ENCODE measurements at regions of chr17 and their contacts with region 1.

Region 1: GRCh38 chr17:50956750-50957523 is 90.8 kb upstream of the TOB1 start:
- DNase-seq: peak; percentile 79
- ATAC-seq: peak; percentile 95
- H3K4me3 Mint-ChIP-seq: no peak overlapping the region
- H3K27ac Mint-ChIP-seq: no peak overlapping the region
- H3K4me1 Mint-ChIP-seq: peaks cover 23% of the 10 kb centered on the region
- H3K27me3 Mint-ChIP-seq: no peaks in the 10 kb centered on the region

Region 2: GRCh38 chr17:50783193-50783660 is 173.7 kb before region 1 on chr17:
- CTCF ChIA-PET with region 1: interaction called, 24 read pairs
- POLR2A ChIA-PET with region 1: no interaction called
- DNase-seq: peak; percentile 85
- ATAC-seq: peak; percentile 67
- H3K4me3 Mint-ChIP-seq: no peak overlapping the region
- H3K27ac Mint-ChIP-seq: no peak overlapping the region
- H3K4me1 Mint-ChIP-seq: peaks cover 32% of the 10 kb centered on the region
- H3K27me3 Mint-ChIP-seq: peaks cover 38% of the 10 kb centered on the region

Region 3: GRCh38 chr17:50841949-50842354 is 115.0 kb before region 1 on chr17:
- CTCF ChIA-PET with region 1: interaction called, 351 read pairs
- POLR2A ChIA-PET with region 1: interaction called, 3 read pairs
- DNase-seq: peak; percentile 70
- ATAC-seq: peak; percentile 70
- H3K4me3 Mint-ChIP-seq: no peak overlapping the region
- H3K27ac Mint-ChIP-seq: no peak overlapping the region
- H3K4me1 Mint-ChIP-seq: no peaks in the 10 kb centered on the region
- H3K27me3 Mint-ChIP-seq: no peaks in the 10 kb centered on the region

Region 4: GRCh38 chr17:50944054-50944901 is 12.7 kb before region 1 on chr17:
- CTCF ChIA-PET with region 1: interaction called, 14 read pairs
- POLR2A ChIA-PET with region 1: interaction called, 4 read pairs
- DNase-seq: peak; percentile 89
- ATAC-seq: peak; percentile 90
- H3K4me3 Mint-ChIP-seq: peak overlapping the region; percentile 72
- H3K27ac Mint-ChIP-seq: peak overlapping the region; percentile 81
- H3K4me1 Mint-ChIP-seq: peaks cover 41% of the 10 kb centered on the region
- H3K27me3 Mint-ChIP-seq: no peaks in the 10 kb centered on the region

Region 5: DNA sequence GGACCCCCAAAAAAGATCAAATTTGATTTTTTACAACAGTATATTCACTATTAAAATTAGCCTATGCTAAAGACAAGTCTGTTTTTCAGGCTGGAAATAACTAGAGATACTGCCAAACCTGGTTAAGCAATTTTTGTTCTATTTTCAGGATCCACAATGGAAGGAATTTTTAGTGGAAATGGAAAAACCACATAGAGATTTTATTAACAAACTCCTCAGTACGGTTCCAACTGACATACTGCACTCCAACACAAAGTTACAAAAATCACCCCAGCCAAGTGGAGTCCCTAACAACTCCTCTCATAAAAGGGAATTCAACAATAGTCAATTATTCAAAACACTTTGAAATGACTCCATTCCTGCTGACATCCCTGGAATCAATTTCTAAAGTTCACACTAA is 10.9 kb after region 1 on chr17:
- CTCF ChIA-PET with region 1: interaction called, 20 read pairs
- POLR2A ChIA-PET with region 1: no interaction called
- DNase-seq: no peak
- ATAC-seq: no peak
- H3K4me3 Mint-ChIP-seq: no peak overlapping the region
- H3K27ac Mint-ChIP-seq: no peak overlapping the region
- H3K4me1 Mint-ChIP-seq: peaks cover 5% of the 10 kb centered on the region
- H3K27me3 Mint-ChIP-seq: no peaks in the 10 kb centered on the region

Region 6: DNA sequence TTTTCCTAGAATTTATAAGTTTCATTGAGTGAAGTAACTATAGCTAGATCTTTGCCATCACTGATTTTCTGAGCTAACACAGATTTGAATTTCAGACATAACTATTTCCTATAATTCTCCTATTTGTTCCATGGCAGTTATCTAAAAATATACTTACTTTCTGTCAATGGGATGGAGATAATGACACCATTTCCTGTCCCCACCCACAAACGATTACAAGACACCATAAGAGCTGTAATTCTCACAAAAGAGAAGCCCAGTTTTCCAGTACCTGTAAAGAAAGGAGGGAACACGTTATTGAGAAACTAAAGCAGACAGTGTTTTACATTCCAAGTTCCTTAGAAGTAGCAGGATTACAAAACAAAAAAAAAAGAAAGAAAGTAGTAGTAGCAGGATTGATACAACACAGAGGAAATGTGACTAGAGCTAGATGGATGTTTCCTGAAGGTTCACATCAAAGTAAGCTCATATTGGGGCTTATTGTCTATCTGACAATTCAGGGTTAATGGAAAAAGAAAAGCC is 20.1 kb after region 1 on chr17:
- CTCF ChIA-PET with region 1: interaction called, 13 read pairs
- POLR2A ChIA-PET with region 1: no interaction called
- DNase-seq: no peak
- ATAC-seq: peak; percentile 36
- H3K4me3 Mint-ChIP-seq: no peak overlapping the region
- H3K27ac Mint-ChIP-seq: peak overlapping the region; percentile 91
- H3K4me1 Mint-ChIP-seq: peaks cover 21% of the 10 kb centered on the region
- H3K27me3 Mint-ChIP-seq: no peaks in the 10 kb centered on the region

Region 7: DNA sequence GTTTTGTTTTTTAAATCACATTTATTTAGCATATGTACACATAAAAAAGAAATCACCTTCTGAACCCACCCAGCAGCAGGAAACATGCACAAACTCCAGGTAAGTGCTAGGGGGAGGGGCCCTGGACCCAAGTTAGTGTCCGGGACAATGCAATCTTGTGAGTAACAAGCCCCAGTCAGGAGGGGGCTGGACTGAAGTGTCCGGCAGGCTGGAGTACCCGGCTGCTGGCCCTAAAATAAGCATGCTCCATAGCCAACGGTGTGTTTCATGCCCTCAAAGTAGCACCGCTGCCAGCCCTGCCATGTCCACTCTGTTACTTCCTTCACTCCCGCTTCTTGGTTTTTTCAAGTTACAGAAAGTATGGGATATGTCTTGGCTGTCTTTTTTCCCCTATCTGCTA is 61.6 kb after region 1 on chr17:
- CTCF ChIA-PET with region 1: no interaction called
- POLR2A ChIA-PET with region 1: no interaction called
- DNase-seq: no peak
- ATAC-seq: no peak
- H3K4me3 Mint-ChIP-seq: no peak overlapping the region
- H3K27ac Mint-ChIP-seq: no peak overlapping the region
- H3K4me1 Mint-ChIP-seq: no peaks in the 10 kb centered on the region
- H3K27me3 Mint-ChIP-seq: no peaks in the 10 kb centered on the region

Region 8: DNA sequence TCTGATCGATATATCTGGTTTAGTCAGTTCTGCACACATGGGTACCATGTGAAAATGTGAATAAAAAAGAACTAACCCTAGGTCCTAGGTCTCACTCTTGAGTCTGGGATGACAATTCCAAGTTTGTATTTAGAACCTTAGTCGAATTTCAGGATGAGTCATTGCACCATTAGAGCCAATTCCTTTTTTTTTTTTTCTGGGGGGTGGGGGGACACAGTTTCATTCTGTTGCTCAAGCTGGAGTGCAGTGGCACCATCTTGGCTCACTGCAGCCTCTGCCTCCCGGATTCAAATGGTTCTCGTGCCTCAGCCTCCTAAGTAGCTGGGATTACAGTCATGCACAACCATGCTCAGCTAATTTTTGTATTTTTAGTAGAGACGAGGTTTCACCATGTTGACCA is 122.1 kb after region 1 on chr17:
- CTCF ChIA-PET with region 1: no interaction called
- POLR2A ChIA-PET with region 1: no interaction called
- DNase-seq: no peak
- ATAC-seq: no peak
- H3K4me3 Mint-ChIP-seq: no peak overlapping the region
- H3K27ac Mint-ChIP-seq: no peak overlapping the region
- H3K4me1 Mint-ChIP-seq: no peaks in the 10 kb centered on the region
- H3K27me3 Mint-ChIP-seq: no peaks in the 10 kb centered on the region

Region 9: GRCh38 chr17:51142597-51142996 is 185.7 kb after region 1 on chr17:
- CTCF ChIA-PET with region 1: no interaction called
- POLR2A ChIA-PET with region 1: no interaction called
- DNase-seq: no peak
- ATAC-seq: no peak
- H3K4me3 Mint-ChIP-seq: no peak overlapping the region
- H3K27ac Mint-ChIP-seq: no peak overlapping the region
- H3K4me1 Mint-ChIP-seq: peaks cover 2% of the 10 kb centered on the region
- H3K27me3 Mint-ChIP-seq: no peaks in the 10 kb centered on the region

Measured in activated CD8-positive, alpha-beta T cell treated with anti-CD3 and anti-CD28 coated beads, Interleukin-2, amount 10 ng/mL, durations not matched to agents 7 days and 5 days (primary cell).